Activated naive CD4-positive, alpha-beta T cell treated with anti-CD3 and anti-CD28 coated beads for 36 hours (primary cell): ENCODE measurements at regions of chr15 and their contacts with region 1.

Region 1: GRCh38 chr15:95291898-95292472 is 1038.5 kb upstream of the NR2F2 start:
- DNase-seq: no peak
- H3K4me3 Mint-ChIP-seq: no peak overlapping the region
- H3K27ac Mint-ChIP-seq: no peak overlapping the region
- H3K4me1 Mint-ChIP-seq: peaks cover under 1% of the 10 kb centered on the region
- H3K27me3 Mint-ChIP-seq: peaks cover 44% of the 10 kb centered on the region

Region 2: GRCh38 chr15:94670438-94671034 is 621.4 kb before region 1 on chr15:
- CTCF ChIA-PET with region 1: interaction called, 3 read pairs
- intact Hi-C with region 1: loop called (anchors 1 kb)
- DNase-seq: no peak
- H3K4me3 Mint-ChIP-seq: no peak overlapping the region
- H3K27ac Mint-ChIP-seq: no peak overlapping the region
- H3K4me1 Mint-ChIP-seq: no peaks in the 10 kb centered on the region
- H3K27me3 Mint-ChIP-seq: peaks cover 12% of the 10 kb centered on the region

Region 3: GRCh38 chr15:96234109-96234892 is 942.3 kb after region 1 on chr15:
- CTCF ChIA-PET with region 1: no interaction called
- intact Hi-C with region 1: no loop called
- DNase-seq: no peak
- H3K4me3 Mint-ChIP-seq: no peak overlapping the region
- H3K27ac Mint-ChIP-seq: no peak overlapping the region
- H3K4me1 Mint-ChIP-seq: no peaks in the 10 kb centered on the region
- H3K27me3 Mint-ChIP-seq: peaks cover 6% of the 10 kb centered on the region